Left cardiac atrium (tissue), 4 donors: ENCODE measurements at regions of chr11 and their contacts with region 1.

Region 1: GRCh38 chr11:62081378-62082291 is 42.2 kb upstream of the INCENP start:
- DNase-seq: peak; percentile 83
- ATAC-seq: peak; percentile 86 to 87

Region 2: DNA sequence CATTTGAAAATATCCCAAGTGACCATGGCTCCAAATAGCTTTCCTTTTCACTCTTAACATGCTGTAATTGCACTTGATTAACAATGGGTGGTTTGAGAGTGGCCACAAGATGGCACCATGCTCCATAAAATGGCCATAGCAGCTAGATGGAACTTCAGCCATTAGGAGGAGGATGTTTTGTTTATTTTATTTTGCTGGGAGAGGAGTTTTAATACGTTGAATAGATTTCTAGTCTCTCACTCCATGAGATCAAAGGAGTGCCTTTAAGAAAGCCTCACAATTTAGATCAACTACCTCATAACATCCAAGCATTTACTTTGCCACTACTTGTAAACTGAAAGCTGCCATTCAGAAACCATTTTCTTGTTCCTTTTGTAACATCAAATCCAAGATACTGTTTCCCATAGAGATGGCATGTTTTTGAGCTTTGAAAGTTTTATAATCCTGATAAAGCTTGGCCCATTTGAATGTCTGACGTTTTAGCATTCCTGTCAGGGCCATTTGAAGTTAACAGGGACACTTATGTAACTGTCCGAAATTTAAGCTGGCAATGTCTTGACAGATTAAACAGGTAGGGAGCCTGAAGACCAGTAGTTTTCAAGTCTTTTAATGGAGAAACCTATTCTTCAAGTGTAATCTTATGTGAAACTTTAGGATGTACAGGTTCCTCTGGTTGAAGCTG is 284.2 kb before region 1 on chr11:
- intact Hi-C with region 1: loop called (anchors 2 to 10 kb)
- DNase-seq: peak; percentile 82
- ATAC-seq: peak; percentile 15 to 38

Region 3: DNA sequence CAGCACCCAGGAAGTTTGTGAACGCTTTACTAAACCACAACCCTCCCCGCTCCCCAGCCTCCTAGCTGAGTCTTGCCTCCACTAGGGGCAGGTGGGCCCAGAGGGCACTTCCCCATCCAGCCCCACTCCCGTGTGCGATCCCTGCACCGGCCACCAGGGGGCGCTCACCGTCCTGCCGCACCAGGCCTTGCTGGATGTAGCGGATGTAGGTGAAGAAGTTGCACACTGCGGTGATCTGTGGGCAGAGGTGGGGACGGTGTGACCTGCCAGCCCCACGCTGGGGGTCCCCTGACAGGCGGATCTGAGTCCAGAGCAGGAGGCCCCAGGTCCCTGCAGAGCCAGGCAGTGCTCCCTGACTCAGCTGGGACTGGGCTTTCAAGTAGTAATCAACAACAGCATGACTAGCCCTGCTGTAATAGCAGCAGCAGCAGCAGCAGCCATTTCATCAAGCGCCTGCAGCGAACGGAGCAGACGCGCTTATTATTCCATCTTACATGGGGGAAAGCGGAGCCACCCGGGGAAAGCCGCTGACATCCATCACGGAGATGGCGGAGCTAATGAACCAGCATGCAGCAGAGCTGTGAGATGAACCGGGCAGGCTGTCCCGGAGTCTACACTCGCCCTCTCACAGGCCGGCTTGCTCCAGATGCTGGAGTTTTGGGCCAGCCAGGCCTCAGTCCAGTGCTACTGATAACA is 182.3 kb before region 1 on chr11:
- intact Hi-C with region 1: loop called (anchors 2 to 5 kb)
- DNase-seq: peak; percentile 82
- ATAC-seq: peak; percentile 83 to 85

Region 4: GRCh38 chr11:62025487-62026105 is 56.0 kb before region 1 on chr11:
- intact Hi-C with region 1: no loop called
- DNase-seq: peak; percentile 81
- ATAC-seq: peak; percentile 91 to 96